ENCODE measurements at regions of chr12 and their contacts with region 1.

Region 1: DNA sequence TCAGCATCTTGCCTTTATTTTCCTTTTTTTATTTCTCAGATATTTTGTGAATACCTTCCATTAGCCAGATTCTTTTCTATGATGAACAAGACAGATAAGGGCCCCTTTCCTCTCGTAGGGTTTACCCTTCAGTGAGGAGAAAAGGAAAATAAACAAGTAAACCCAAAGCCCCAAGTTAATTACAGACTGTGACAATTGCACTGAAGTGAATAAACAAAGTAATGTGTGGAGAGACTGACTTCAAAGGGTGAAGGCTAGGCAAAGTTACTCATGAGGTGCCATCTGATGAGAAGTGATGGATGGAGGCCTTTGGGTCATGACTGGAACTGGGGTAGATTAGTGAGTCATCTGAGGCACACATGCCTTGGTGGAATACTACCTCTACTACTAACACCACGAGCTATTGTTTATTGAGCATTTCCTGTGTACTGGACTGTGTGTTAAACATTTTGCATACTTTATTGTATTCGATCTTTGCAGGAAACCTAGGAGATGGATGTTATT is 143.4 kb upstream of the PRICKLE1 start:
- DNase-seq: no peak
- H3K4me3 ChIP-seq: no peak overlapping the region
- H3K27ac ChIP-seq: no peak overlapping the region
- H3K4me1 ChIP-seq: peaks cover 0 to 10% (median 0%) of the 10 kb centered on the region in 4 donors
- H3K27me3 ChIP-seq: no peaks in the 10 kb centered on the region
- CTCF ChIP-seq: no peak
- EP300 ChIP-seq: no peak
- POLR2A ChIP-seq: no peak

Region 2: GRCh38 chr12:42763682-42764081 is 30.7 kb after region 1 on chr12:
- in situ Hi-C with region 1: no loop called
- intact Hi-C with region 1: loop called (anchors 1 kb)
- DNase-seq: no peak
- H3K4me3 ChIP-seq: no peak overlapping the region
- H3K27ac ChIP-seq: no peak overlapping the region
- H3K4me1 ChIP-seq: peaks cover 0 to 15% (median 0%) of the 10 kb centered on the region in 4 donors
- H3K27me3 ChIP-seq: no peaks in the 10 kb centered on the region
- CTCF ChIP-seq: no peak
- EP300 ChIP-seq: no peak
- POLR2A ChIP-seq: no peak